Activated T-helper 2 cell treated with anti-CD3 and anti-CD28 coated beads, Interferon-gamma antibody, Interleukin-2, Interleukin-4, amounts not matched to agents 10 μg/mL and 5 μg/mL and 100 μg/mL, durations not matched to agents 14 hours and 24 hours and 36 hours (primary cell): ENCODE measurements at regions of chr4 and their contacts with region 1.

Region 1: GRCh38 chr4:87422104-87423052 is at the start of gene NUDT9:
- DNase-seq: peak; percentile 84
- H3K4me3 Mint-ChIP-seq: peak within 1 kb of the TSS; percentile 99
- H3K27ac Mint-ChIP-seq: peak within 1 kb of the TSS; percentile 98
- H3K4me1 Mint-ChIP-seq: peaks cover 20% of the 10 kb centered on the region
- H3K27me3 Mint-ChIP-seq: no peaks in the 10 kb centered on the region
- total RNA-seq, gene NUDT9: 12.0 and 12.1 TPM in 2 replicates

Region 2: DNA sequence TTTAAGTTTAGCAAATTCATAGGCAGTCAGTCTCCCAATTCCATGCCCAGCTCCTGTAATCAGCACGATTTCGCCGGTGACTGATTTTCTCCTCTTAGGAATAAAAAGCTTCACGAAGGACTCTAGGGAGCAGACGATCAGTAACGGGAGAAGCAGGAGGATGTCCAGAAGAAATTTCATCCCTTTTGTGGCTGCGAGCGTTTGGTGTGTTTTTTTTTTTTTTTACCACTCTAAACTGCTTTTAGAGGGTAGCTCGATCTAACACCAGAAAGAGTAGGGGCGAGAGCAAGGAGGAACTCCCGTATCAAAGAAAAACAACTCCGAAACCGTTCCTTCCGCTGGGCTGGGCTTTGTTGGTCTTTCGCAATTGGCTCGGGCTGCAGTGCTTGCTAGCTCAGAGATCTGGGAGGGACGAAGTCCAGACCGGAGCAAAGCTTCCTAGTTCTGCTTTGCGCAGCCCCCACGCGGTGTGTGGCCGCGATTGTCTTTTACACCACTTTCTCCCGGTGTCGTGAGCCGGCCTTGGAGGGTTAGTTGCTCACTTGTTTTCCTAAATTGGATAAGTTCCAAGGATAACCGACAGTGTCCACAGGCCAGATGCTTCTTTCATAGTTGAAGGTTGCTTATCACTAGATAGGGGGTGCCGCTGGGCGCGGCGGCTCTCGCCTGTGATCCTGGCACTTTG is 31.3 kb before region 1 on chr4 and contains the start of gene HSD17B11:
- intact Hi-C with region 1: loop called (anchors 1 kb)
- DNase-seq: peak; percentile 75
- H3K4me3 Mint-ChIP-seq: peak within 1 kb of the TSS; percentile 94
- H3K27ac Mint-ChIP-seq: peak within 1 kb of the TSS; percentile 89
- H3K4me1 Mint-ChIP-seq: peaks cover 29% of the 10 kb centered on the region
- H3K27me3 Mint-ChIP-seq: peaks cover 4% of the 10 kb centered on the region
- total RNA-seq, gene HSD17B11: 14.2 and 14.8 TPM in 2 replicates